ENCODE measurements at regions of chr6 and their contacts with region 1.

Region 1: DNA sequence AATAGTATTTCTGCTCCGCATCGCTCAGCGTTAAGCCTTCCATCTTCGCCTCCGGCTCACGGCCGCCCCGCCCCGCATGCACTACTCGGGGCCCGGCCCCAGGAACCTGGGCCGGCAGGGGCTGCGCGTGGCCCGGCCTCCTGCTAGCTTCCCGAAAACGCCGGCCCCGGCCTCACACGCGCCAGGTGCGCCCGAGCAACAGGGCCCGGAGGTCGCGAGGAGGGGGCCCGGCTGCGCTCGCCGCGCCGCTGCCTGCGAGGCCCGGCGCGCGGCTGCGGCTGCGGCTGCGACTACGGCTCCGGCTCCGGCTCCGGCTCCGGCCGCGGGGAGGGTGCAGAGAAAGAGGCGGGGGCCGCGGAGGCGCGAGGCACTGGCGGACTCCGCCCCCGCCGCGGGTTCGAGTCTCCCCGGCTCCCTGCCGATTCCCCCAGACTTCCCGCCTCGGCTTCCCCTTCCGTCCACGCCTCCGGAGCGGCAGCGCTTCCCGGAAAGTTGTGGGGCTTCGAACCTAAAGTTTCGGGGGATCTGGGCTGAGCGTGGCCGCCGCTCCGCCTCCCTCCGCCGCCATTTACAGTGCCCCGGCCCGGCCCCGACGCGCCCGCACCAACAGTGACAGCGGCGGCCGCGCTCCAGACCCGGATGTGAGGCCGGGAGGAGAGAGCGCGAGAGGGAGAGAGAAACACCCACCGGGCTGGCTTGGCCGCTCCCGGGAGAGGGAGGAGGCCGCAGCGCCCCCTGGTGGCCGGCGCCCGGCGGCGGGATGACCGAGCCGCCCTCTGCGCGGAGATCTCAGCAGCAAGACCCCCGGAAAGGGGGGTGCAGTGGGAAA is at the start of gene REPS1:
- DNase-seq: peak; percentile 94
- ATAC-seq: peak; percentile 94
- H3K4me3 Mint-ChIP-seq: peak within 1 kb of the TSS; percentile 92
- H3K27ac Mint-ChIP-seq: peak within 1 kb of the TSS; percentile 91
- H3K4me1 Mint-ChIP-seq: peaks cover 7% of the 10 kb centered on the region
- H3K27me3 Mint-ChIP-seq: no peaks in the 10 kb centered on the region
- CTCF ChIP-seq: peak; percentile 91
- total RNA-seq, gene REPS1: 44.8 and 58.8 TPM in 2 replicates

Region 2: DNA sequence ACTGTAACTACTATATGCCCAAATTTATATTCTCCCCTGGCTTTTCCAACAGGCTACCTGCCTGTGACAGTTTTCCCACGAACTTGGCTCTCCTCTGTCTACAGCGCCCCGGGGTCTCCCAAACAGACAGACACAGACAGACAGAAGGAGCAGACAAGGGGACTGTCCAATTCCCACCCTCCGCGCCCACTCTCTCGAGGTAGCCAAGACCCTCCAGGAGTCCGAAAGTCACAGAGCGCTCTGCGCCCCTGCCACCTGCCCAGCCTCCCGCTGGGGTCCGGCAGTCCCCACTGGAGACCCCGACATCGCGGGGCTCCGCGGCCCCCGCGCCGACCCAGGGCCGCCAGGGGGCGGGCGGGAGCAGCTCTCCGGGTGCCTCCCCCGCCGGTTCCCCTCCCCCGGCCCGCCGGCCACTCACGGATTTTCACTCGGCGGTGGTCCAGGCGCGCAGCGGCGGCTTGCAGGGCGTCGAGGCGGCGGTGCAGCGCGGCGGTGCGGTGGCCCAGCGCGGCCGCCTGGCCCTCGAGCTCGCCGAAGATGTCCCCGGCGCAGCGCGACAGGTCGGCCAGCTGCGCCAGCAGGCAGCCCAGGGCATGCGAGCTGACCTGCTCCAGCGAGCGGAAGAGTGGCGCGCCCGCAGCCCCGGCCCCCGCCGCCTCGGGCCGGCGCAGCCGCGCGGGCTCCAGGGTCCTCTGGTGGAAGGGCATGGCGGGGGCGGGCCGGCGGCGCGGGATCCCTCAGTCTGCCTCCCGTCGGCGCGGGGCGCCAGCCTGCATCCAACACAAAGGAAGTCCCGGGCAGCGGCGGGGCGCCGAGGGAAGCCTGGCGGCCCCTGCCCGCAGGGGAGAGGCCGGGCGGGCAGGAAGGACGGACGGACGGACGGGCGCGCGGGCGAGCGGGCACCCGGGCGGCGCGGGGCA is 295.5 kb before region 1 on chr6:
- CTCF ChIA-PET with region 1: no interaction called
- POLR2A ChIA-PET with region 1: no interaction called
- intact Hi-C with region 1: loop called (anchors 2 kb)
- DNase-seq: peak; percentile 75
- ATAC-seq: peak; percentile 79
- H3K4me3 Mint-ChIP-seq: peak overlapping the region; percentile 87
- H3K27ac Mint-ChIP-seq: no peak overlapping the region
- H3K4me1 Mint-ChIP-seq: peaks cover 11% of the 10 kb centered on the region
- H3K27me3 Mint-ChIP-seq: peaks cover 31% of the 10 kb centered on the region
- CTCF ChIP-seq: peak; percentile 63

Region 3: DNA sequence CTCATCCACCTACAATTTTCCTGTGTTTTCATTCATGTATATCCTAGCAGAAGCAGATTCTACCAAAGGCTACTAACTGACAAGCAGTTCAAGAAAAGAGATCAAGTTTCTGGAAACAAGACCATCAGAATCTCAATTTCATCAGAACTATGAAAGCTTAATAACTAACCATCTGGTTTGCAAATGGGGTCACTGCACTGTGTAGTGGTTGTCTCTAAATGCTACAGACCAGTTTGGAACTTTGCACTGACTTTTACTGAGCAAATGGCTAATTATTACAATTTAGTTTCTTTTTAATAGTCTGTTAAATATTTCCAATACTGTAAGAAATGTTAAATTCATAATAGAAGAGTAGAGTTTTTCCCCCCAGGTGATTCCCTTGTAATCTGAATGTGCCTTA is 64.3 kb before region 1 on chr6:
- CTCF ChIA-PET with region 1: no interaction called
- POLR2A ChIA-PET with region 1: no interaction called
- intact Hi-C with region 1: loop called (anchors 5 kb)
- DNase-seq: no peak
- ATAC-seq: no peak
- H3K4me3 Mint-ChIP-seq: no peak overlapping the region
- H3K27ac Mint-ChIP-seq: no peak overlapping the region
- H3K4me1 Mint-ChIP-seq: no peaks in the 10 kb centered on the region
- H3K27me3 Mint-ChIP-seq: no peaks in the 10 kb centered on the region
- CTCF ChIP-seq: no peak

Region 4: GRCh38 chr6:139016337-139017213 is 28.7 kb after region 1 on chr6:
- CTCF ChIA-PET with region 1: interaction called, 5 read pairs
- POLR2A ChIA-PET with region 1: no interaction called
- intact Hi-C with region 1: loop called (anchors 1 kb)
- DNase-seq: no peak
- ATAC-seq: peak; percentile 96
- H3K4me3 Mint-ChIP-seq: no peak overlapping the region
- H3K27ac Mint-ChIP-seq: peak overlapping the region; percentile 46
- H3K4me1 Mint-ChIP-seq: peaks cover 20% of the 10 kb centered on the region
- H3K27me3 Mint-ChIP-seq: no peaks in the 10 kb centered on the region
- CTCF ChIP-seq: no peak

Region 5: GRCh38 chr6:139124887-139125672 is 137.2 kb after region 1 on chr6:
- CTCF ChIA-PET with region 1: interaction called, 4 read pairs
- POLR2A ChIA-PET with region 1: no interaction called
- intact Hi-C with region 1: loop called (anchors 2 kb)
- DNase-seq: peak; percentile 42
- ATAC-seq: peak; percentile 100
- H3K4me3 Mint-ChIP-seq: peak overlapping the region; percentile 62
- H3K27ac Mint-ChIP-seq: peak overlapping the region; percentile 88
- H3K4me1 Mint-ChIP-seq: peaks cover 38% of the 10 kb centered on the region
- H3K27me3 Mint-ChIP-seq: no peaks in the 10 kb centered on the region
- CTCF ChIP-seq: no peak

Region 6: DNA sequence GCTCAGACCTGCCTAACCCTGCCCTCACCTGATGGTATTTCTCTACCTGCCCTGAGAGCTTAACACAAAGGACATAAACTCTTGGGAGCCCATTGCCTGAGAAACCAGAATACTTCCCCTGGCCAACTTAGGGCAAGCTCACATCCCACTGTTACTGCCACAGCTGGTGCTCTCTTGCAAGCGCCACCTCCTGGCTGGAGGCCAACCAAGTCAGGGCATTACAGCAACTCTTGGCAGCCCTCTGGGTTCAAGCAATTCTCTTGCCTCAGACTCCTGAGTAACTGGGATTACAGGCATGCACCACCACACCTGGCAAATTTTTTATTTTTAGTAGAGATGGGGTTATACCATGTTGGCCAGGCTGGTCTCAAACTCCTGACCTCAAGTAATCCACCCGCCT is 217.1 kb after region 1 on chr6:
- CTCF ChIA-PET with region 1: no interaction called
- POLR2A ChIA-PET with region 1: no interaction called
- intact Hi-C with region 1: no loop called
- DNase-seq: no peak
- ATAC-seq: no peak
- H3K4me3 Mint-ChIP-seq: no peak overlapping the region
- H3K27ac Mint-ChIP-seq: no peak overlapping the region
- H3K4me1 Mint-ChIP-seq: no peaks in the 10 kb centered on the region
- H3K27me3 Mint-ChIP-seq: no peaks in the 10 kb centered on the region
- CTCF ChIP-seq: no peak

Region 7: GRCh38 chr6:139364302-139364981 is 376.6 kb after region 1 on chr6:
- CTCF ChIA-PET with region 1: interaction called, 4 read pairs
- POLR2A ChIA-PET with region 1: no interaction called
- intact Hi-C with region 1: loop called (anchors 1 kb)
- DNase-seq: no peak
- ATAC-seq: peak; percentile 67
- H3K4me3 Mint-ChIP-seq: peak overlapping the region; percentile 9
- H3K27ac Mint-ChIP-seq: no peak overlapping the region
- H3K4me1 Mint-ChIP-seq: peaks cover 20% of the 10 kb centered on the region
- H3K27me3 Mint-ChIP-seq: no peaks in the 10 kb centered on the region
- CTCF ChIP-seq: peak; percentile 67

Measured in activated B cell treated with CpG ODN at 0.5 μM for 24 hours (primary cell).